ENCODE measurements at regions of chr13 and their contacts with region 1.

Region 1: GRCh38 chr13:110615322-110616102 is at the start of gene NAXD:
- DNase-seq: peak; percentile 96
- H3K4me3 Mint-ChIP-seq: peak within 1 kb of the TSS; percentile 82
- H3K27ac Mint-ChIP-seq: peak within 1 kb of the TSS; percentile 94
- H3K4me1 Mint-ChIP-seq: peaks cover 18% of the 10 kb centered on the region
- H3K27me3 Mint-ChIP-seq: no peaks in the 10 kb centered on the region
- CTCF ChIP-seq: no peak
- total RNA-seq, gene NAXD: 27.7 and 28.3 TPM in 2 replicates

Region 2: GRCh38 chr13:110561344-110562035 is 54.0 kb before region 1 on chr13 and contains the start of gene RAB20:
- CTCF ChIA-PET with region 1: interaction called, 4 read pairs
- POLR2A ChIA-PET with region 1: interaction called, 16 read pairs
- intact Hi-C with region 1: no loop called
- DNase-seq: peak; percentile 87
- H3K4me3 Mint-ChIP-seq: peak within 1 kb of the TSS; percentile 88
- H3K27ac Mint-ChIP-seq: peak within 1 kb of the TSS; percentile 33
- H3K4me1 Mint-ChIP-seq: peaks cover 13% of the 10 kb centered on the region
- H3K27me3 Mint-ChIP-seq: no peaks in the 10 kb centered on the region
- CTCF ChIP-seq: no peak
- total RNA-seq, gene RAB20: 1.7 and 2.8 TPM in 2 replicates

Region 3: GRCh38 chr13:110575322-110576069 is 40.0 kb before region 1 on chr13:
- CTCF ChIA-PET with region 1: no interaction called
- POLR2A ChIA-PET with region 1: no interaction called
- intact Hi-C with region 1: no loop called
- DNase-seq: no peak
- H3K4me3 Mint-ChIP-seq: no peak overlapping the region
- H3K27ac Mint-ChIP-seq: no peak overlapping the region
- H3K4me1 Mint-ChIP-seq: no peaks in the 10 kb centered on the region
- H3K27me3 Mint-ChIP-seq: peaks cover 51% of the 10 kb centered on the region
- CTCF ChIP-seq: no peak

Region 4: DNA sequence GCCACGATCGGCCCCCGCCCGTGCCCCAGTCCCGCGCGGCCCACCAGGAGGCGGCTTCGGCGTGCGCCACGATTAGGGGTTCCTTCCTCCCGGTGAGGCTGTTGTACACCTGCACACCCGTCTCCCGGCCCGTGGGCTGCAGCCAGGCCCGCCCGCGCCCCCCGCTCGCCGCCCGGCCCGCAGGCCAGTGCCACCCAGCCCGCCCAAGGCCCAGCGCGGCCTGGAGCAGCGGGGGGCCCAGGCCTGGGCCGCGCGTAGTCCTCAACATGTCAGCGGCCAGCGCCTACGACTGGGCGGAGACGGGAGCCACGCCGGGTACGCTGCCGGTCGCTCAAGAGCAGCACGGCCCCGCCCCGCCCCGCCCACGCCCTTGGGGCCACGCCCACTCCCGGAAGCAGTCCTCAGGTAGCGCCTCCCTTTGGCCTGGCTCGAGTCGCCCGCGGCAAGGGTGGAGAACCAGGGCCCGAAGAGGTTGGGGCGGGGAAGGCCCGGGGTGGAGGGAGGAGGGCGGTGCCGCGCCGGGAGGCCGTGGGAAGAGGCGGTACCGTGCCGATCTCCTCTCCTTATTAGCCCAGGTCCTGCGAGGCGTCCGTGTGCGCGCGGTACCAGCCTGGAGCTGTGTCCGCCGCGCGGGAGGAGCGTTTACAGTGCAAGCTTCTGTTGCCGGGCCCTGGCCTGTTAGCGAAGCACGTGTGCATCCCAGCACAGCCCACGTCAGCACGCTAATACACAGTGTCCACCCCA is 90.5 kb after region 1 on chr13 and contains the start of gene CARS2:
- CTCF ChIA-PET with region 1: no interaction called
- POLR2A ChIA-PET with region 1: interaction called, 13 read pairs
- intact Hi-C with region 1: no loop called
- DNase-seq: peak; percentile 98
- H3K4me3 Mint-ChIP-seq: peak within 1 kb of the TSS; percentile 82
- H3K27ac Mint-ChIP-seq: peak within 1 kb of the TSS; percentile 70
- H3K4me1 Mint-ChIP-seq: peaks cover 21% of the 10 kb centered on the region
- H3K27me3 Mint-ChIP-seq: no peaks in the 10 kb centered on the region
- CTCF ChIP-seq: no peak
- total RNA-seq, gene CARS2: 104 and 121 TPM in 2 replicates

Region 5: GRCh38 chr13:110819203-110820014 is 203.9 kb after region 1 on chr13:
- CTCF ChIA-PET with region 1: interaction called, 4 read pairs
- POLR2A ChIA-PET with region 1: interaction called, 3 read pairs
- intact Hi-C with region 1: loop called (anchors 1 kb)
- DNase-seq: peak; percentile 78
- H3K4me3 Mint-ChIP-seq: no peak overlapping the region
- H3K27ac Mint-ChIP-seq: no peak overlapping the region
- H3K4me1 Mint-ChIP-seq: peaks cover 5% of the 10 kb centered on the region
- H3K27me3 Mint-ChIP-seq: no peaks in the 10 kb centered on the region
- CTCF ChIP-seq: peak; percentile 92

Measured in MCF 10A (cell line).